ENCODE measurements at regions of chr6 and their contacts with region 1.

Region 1: GRCh38 chr6:44010411-44011349 is 116.6 kb downstream of the MRPL14 start:
- DNase-seq: peak; percentile 51 to 58
- ATAC-seq: peak; percentile 51 to 94 (median 87)
- H3K4me3 ChIP-seq: peak overlapping the region in 1 of 10 donors; percentile 3
- H3K27ac ChIP-seq: peak overlapping the region in 9 of 10 donors; percentile 59 to 92 (median 82)
- H3K4me1 ChIP-seq: peaks cover 0 to 42% (median 19%) of the 10 kb centered on the region in 9 donors
- H3K27me3 ChIP-seq: peaks cover 0 to 16% (median 0%) of the 10 kb centered on the region in 7 donors
- CTCF ChIP-seq: no peak

Region 2: GRCh38 chr6:43990627-43991619 is 19.8 kb before region 1 on chr6:
- intact Hi-C with region 1: loop called in 1 of 10 experiments (anchors 2 kb)
- DNase-seq: no peak
- ATAC-seq: peak in 7 of 8 donors; percentile 2 to 33 (median 8)
- H3K4me3 ChIP-seq: no peak overlapping the region
- H3K27ac ChIP-seq: peak overlapping the region; percentile 41 to 94 (median 84)
- H3K4me1 ChIP-seq: peaks cover 12 to 70% (median 24%) of the 10 kb centered on the region in 9 donors
- H3K27me3 ChIP-seq: no peaks in the 10 kb centered on the region
- CTCF ChIP-seq: no peak

Measured in heart right ventricle (tissue), 16 donors.